GM10248 (cell line): ENCODE measurements at regions of chr14 and their contacts with region 1.

Region 1: GRCh38 chr14:23631702-23632460 is 4.3 kb upstream of the DHRS2 start:
- DNase-seq: peak; percentile 82
- CTCF ChIP-seq: peak; percentile 90

Region 2: DNA sequence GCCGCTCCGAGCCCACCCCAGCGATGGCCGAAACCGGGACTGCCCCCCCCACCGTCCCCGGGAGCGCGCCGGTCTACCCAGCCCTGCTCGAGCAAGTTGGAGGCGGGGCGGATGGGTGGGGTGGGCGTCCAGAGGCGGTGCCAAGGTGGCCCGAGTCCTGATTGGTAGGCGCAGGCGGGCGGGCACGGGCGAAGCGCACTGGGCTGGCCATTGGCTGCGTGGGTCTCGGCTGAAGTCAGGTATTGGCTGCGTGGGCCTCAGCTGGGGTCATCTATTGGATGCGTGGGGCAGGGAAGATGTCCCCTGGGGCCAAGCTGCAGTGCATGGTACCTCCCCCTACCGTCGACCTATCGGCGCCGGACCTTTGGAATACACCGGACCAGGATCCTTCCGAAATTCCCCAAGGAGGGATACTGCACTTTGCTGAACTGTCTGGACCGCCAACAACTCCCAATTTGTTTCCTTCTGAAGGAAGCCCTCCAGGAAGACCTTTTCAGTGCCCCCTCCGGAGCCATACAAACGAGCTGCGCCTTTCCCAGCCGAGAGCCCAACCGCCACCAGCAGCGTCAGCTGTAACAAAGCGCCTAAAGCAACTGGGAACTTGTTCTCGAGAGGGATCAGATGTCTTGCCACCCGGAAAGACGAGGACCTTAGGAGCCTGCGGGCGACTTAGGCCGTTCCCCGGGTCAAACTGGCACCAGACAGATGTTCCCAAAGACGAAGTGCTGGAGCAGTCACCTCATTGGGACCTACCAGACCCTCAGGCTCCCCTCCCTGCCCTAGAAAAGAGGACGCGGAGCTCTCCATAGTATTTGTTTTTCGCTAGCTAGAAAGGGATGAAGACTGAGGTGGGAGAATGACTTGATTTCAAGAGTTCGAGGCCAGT is 345.6 kb before region 1 on chr14 and contains the start of gene HOMEZ:
- CTCF ChIA-PET with region 1: no interaction called
- POLR2A ChIA-PET with region 1: no interaction called
- DNase-seq: peak; percentile 97
- CTCF ChIP-seq: no peak

Region 3: GRCh38 chr14:23406244-23406643 is 225.6 kb before region 1 on chr14:
- CTCF ChIA-PET with region 1: no interaction called
- POLR2A ChIA-PET with region 1: no interaction called
- DNase-seq: no peak
- CTCF ChIP-seq: no peak

Region 4: GRCh38 chr14:23562268-23563203 is 69.3 kb before region 1 on chr14:
- CTCF ChIA-PET with region 1: interaction called, 19 read pairs
- POLR2A ChIA-PET with region 1: no interaction called
- DNase-seq: peak; percentile 62
- CTCF ChIP-seq: peak; percentile 93

Region 5: DNA sequence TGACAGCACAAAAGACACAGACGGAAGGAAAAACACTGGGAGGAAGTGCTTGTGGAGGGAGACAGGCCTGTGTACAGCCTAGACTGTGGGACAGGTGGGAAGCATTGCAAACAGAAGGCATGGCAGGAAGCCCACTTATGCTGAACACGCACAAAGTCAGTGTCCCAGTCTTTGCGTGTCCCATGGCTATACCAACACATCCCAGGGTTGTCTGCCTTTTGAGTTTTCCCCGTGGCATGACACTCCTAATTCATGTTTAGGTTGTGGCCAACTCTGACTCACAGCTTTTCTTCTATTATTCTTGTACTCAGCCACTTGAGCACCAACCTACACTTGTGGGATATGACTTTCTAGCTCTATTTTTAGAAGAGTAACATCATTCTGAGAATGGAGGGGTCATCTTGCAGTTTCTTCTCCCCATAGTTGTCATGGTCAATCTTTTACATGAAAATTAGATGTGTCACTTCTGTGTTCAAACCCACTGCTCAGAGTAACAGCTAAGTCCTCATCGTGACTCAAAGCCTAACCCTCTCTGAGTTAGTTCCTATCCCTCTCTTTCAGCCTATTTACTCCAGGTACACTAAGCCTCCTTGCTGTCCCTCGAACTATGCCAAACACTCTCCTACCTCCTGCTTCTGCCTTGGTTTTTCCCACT is 25.8 kb before region 1 on chr14:
- CTCF ChIA-PET with region 1: interaction called, 119 read pairs
- POLR2A ChIA-PET with region 1: no interaction called
- DNase-seq: peak; percentile 76
- CTCF ChIP-seq: no peak

Region 6: GRCh38 chr14:23646648-23647549 is 15.0 kb after region 1 on chr14:
- CTCF ChIA-PET with region 1: interaction called, 62 read pairs
- POLR2A ChIA-PET with region 1: no interaction called
- DNase-seq: no peak
- CTCF ChIP-seq: no peak

Region 7: GRCh38 chr14:23665375-23666192 is 33.7 kb after region 1 on chr14:
- CTCF ChIA-PET with region 1: interaction called, 57 read pairs
- POLR2A ChIA-PET with region 1: no interaction called
- DNase-seq: no peak
- CTCF ChIP-seq: peak; percentile 63

Region 8: GRCh38 chr14:23895480-23895879 is 263.6 kb after region 1 on chr14:
- CTCF ChIA-PET with region 1: interaction called, 10 read pairs
- POLR2A ChIA-PET with region 1: no interaction called
- DNase-seq: no peak
- CTCF ChIP-seq: no peak

Region 9: GRCh38 chr14:23929822-23930294 is 298.0 kb after region 1 on chr14:
- CTCF ChIA-PET with region 1: interaction called, 57 read pairs
- POLR2A ChIA-PET with region 1: no interaction called
- DNase-seq: peak; percentile 81
- CTCF ChIP-seq: peak; percentile 81

Region 10: GRCh38 chr14:24259252-24259995 is 627.5 kb after region 1 on chr14:
- CTCF ChIA-PET with region 1: no interaction called
- POLR2A ChIA-PET with region 1: no interaction called
- DNase-seq: no peak
- CTCF ChIP-seq: no peak